Activated CD4-positive, alpha-beta memory T cell treated with anti-CD3 and anti-CD28 coated beads for 36 hours (primary cell): ENCODE measurements at regions of chr13 and their contacts with region 1.

Region 1: GRCh38 chr13:99356158-99357091 is 49.2 kb upstream of the GPR183 start:
- DNase-seq: peak; percentile 62
- H3K4me3 Mint-ChIP-seq: peak overlapping the region; percentile 56
- H3K27ac Mint-ChIP-seq: peak overlapping the region; percentile 95
- H3K4me1 Mint-ChIP-seq: peaks cover 96% of the 10 kb centered on the region
- H3K27me3 Mint-ChIP-seq: no peaks in the 10 kb centered on the region

Region 2: DNA sequence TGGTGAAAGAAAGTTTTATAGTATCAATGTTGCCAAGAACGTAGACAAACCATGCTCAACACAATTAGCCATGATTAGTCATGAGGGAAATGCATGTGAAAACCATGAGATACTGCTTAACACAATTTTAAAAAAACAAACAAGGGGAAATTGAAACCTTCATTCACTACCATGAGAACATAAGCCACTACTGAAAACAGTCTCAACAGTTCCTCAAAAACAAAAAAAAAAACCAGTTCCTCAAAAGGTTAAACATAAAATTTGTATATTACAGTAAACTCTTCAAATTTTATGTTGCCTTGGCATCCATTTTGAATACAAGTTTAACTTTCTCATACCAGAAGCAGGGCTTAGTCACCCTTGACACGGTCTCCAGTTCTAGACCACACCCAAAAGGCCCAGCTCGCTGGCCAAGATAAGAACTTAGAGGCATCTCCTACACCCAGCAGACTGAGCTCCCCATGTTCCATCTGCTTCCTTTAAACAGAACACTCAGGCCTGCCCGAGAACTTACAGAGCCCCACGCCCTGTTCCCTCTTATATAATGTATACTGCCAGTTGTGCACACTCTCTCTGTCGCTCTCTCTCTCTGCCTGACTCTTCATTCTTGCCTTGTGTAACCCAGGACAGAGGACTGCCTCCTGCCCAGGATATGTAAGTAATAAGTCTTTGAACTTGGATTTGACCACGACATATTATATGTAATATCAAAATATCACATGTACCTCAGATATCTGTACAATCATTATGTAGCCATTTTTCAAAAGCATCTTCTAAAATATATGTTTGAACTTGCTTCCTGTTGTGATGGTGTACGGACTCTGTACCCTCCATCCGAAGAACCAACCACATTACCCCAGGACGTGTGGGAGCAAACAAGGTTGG is 846.9 kb before region 1 on chr13:
- CTCF ChIA-PET with region 1: no interaction called
- POLR2A ChIA-PET with region 1: no interaction called
- intact Hi-C with region 1: loop called (anchors 10 kb)
- DNase-seq: peak; percentile 78
- H3K4me3 Mint-ChIP-seq: peak overlapping the region; percentile 33
- H3K27ac Mint-ChIP-seq: peak overlapping the region; percentile 95
- H3K4me1 Mint-ChIP-seq: peaks cover 95% of the 10 kb centered on the region
- H3K27me3 Mint-ChIP-seq: no peaks in the 10 kb centered on the region

Region 3: GRCh38 chr13:99144306-99144705 is 212.1 kb before region 1 on chr13:
- CTCF ChIA-PET with region 1: no interaction called
- POLR2A ChIA-PET with region 1: no interaction called
- intact Hi-C with region 1: no loop called
- DNase-seq: no peak
- H3K4me3 Mint-ChIP-seq: no peak overlapping the region
- H3K27ac Mint-ChIP-seq: no peak overlapping the region
- H3K4me1 Mint-ChIP-seq: no peaks in the 10 kb centered on the region
- H3K27me3 Mint-ChIP-seq: peaks cover 1% of the 10 kb centered on the region

Region 4: GRCh38 chr13:99200432-99201167 is 155.8 kb before region 1 on chr13 and contains the start of gene UBAC2:
- CTCF ChIA-PET with region 1: no interaction called
- POLR2A ChIA-PET with region 1: interaction called, 5 read pairs
- intact Hi-C with region 1: loop called (anchors 2 kb)
- DNase-seq: peak; percentile 97
- H3K4me3 Mint-ChIP-seq: peak within 1 kb of the TSS; percentile 90
- H3K27ac Mint-ChIP-seq: peak within 1 kb of the TSS; percentile 90
- H3K4me1 Mint-ChIP-seq: peaks cover 59% of the 10 kb centered on the region
- H3K27me3 Mint-ChIP-seq: no peaks in the 10 kb centered on the region
- total RNA-seq, gene UBAC2: 51.8 to 54.5 TPM

Region 5: GRCh38 chr13:99307648-99308339 is 48.6 kb before region 1 on chr13:
- CTCF ChIA-PET with region 1: interaction called, 12 read pairs
- POLR2A ChIA-PET with region 1: interaction called, 246 read pairs
- intact Hi-C with region 1: loop called (anchors 1 kb)
- DNase-seq: peak; percentile 91
- H3K4me3 Mint-ChIP-seq: peak overlapping the region; percentile 93
- H3K27ac Mint-ChIP-seq: peak overlapping the region; percentile 99
- H3K4me1 Mint-ChIP-seq: peaks cover 72% of the 10 kb centered on the region
- H3K27me3 Mint-ChIP-seq: no peaks in the 10 kb centered on the region

Region 6: GRCh38 chr13:99339736-99340397 is 16.6 kb before region 1 on chr13:
- CTCF ChIA-PET with region 1: interaction called, 17 read pairs
- POLR2A ChIA-PET with region 1: interaction called, 3 read pairs
- intact Hi-C with region 1: no loop called
- DNase-seq: peak; percentile 68
- H3K4me3 Mint-ChIP-seq: peak overlapping the region; percentile 12
- H3K27ac Mint-ChIP-seq: no peak overlapping the region
- H3K4me1 Mint-ChIP-seq: peaks cover 72% of the 10 kb centered on the region
- H3K27me3 Mint-ChIP-seq: no peaks in the 10 kb centered on the region

Region 7: GRCh38 chr13:99386911-99387788 is 30.7 kb after region 1 on chr13:
- CTCF ChIA-PET with region 1: interaction called, 18 read pairs
- POLR2A ChIA-PET with region 1: interaction called, 20 read pairs
- intact Hi-C with region 1: no loop called
- DNase-seq: peak; percentile 92
- H3K4me3 Mint-ChIP-seq: no peak overlapping the region
- H3K27ac Mint-ChIP-seq: peak overlapping the region; percentile 61
- H3K4me1 Mint-ChIP-seq: peaks cover 64% of the 10 kb centered on the region
- H3K27me3 Mint-ChIP-seq: no peaks in the 10 kb centered on the region